ENCODE measurements at regions of chr6 and their contacts with region 1.

Region 1: DNA sequence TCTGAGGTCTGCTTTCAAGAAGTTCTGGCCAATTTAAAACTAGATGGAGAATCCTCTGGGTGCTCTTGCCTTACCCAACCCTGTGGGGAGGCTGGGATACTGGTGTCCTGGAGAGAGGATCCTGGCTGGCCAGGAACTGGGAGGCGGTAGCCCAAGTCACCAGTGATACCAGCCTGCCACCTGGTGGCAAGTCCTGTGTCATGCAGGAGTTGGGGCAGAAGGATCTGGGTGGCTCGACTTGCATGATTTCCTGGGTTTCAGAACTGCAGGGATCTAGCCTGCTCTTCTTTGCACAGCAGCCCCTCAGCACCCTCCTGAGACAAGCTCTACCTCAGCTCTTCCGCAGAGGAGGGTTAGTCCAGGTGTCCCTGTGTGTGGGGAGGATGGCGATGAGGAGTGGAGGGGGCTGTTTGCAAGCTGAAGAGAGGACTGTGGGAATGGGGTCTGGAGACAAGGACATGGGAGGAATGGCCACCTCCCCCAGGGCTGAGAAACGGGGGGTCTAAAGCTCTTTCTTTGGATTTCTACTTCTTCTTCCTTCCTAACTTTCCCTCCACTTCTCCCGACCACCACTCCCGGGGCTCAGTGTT is 4.2 kb downstream of the KCNK17 start:
- DNase-seq: peak; percentile 67 to 86 (median 85)
- ATAC-seq: peak; percentile 88
- H3K4me3 ChIP-seq: no peak overlapping the region
- H3K4me1 ChIP-seq: peaks cover 17% of the 10 kb centered on the region
- CTCF ChIP-seq: peak; percentile 86

Region 2: GRCh38 chr6:38871741-38872568 is 438.1 kb before region 1 on chr6:
- intact Hi-C with region 1: loop called (anchors 5 to 10 kb)
- DNase-seq: peak in 2 of 3 donors; percentile 46 to 72
- ATAC-seq: peak; percentile 62
- H3K4me3 ChIP-seq: no peak overlapping the region
- H3K4me1 ChIP-seq: no peaks in the 10 kb centered on the region
- CTCF ChIP-seq: peak; percentile 72

Region 3: DNA sequence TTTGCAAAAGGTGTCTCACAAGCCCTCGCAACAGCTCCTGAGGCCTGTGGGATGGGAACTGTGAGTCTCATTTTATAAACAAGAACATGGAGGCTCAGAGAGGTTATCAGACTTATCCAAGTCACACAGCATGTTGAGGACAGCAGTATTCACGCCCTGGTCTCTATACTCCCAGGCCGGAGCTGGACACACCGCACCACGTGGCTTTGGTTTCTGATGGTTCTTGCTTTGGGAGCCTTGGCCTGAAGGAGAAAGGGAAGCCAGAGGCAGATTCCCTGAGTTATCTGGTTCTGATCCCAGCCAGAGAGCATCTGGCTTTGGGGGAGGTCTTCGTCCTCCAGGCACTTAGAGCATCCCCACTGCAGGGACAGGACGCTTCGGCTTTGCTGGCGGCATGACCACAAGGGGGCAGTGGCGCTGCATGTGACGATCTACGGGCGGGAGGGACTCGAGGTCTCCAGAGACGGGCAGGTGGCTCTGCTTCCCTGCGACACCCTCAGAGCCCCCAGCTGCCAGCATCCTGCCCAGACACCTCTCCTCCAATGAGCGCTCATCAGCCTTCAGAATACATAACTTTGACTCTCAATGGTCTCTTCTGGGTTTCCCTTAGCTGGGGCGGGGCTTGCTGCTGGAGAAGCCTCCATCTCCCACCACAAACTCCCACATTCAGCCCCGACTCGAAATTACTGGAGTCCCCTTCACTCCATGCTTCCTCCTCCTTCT is 143.7 kb before region 1 on chr6:
- intact Hi-C with region 1: loop called in 1 of 2 experiments (anchors 5 kb)
- DNase-seq: peak; percentile 83 to 92 (median 90)
- ATAC-seq: peak; percentile 81
- H3K4me3 ChIP-seq: no peak overlapping the region
- H3K4me1 ChIP-seq: peaks cover 18% of the 10 kb centered on the region
- CTCF ChIP-seq: peak; percentile 88